Activated CD4-positive, alpha-beta T cell treated with anti-CD3 and anti-CD28 coated beads for 36 hours (primary cell): ENCODE measurements at regions of chr2 and their contacts with region 1.

Region 1: GRCh38 chr2:71545572-71546274 is 92.4 kb downstream of the DYSF start:
- DNase-seq: peak; percentile 67
- ATAC-seq: peak; percentile 85
- H3K4me3 Mint-ChIP-seq: peak overlapping the region; percentile 39
- H3K27ac Mint-ChIP-seq: no peak overlapping the region
- H3K4me1 Mint-ChIP-seq: peaks cover 7% of the 10 kb centered on the region
- H3K27me3 Mint-ChIP-seq: peaks cover 14% of the 10 kb centered on the region

Region 2: DNA sequence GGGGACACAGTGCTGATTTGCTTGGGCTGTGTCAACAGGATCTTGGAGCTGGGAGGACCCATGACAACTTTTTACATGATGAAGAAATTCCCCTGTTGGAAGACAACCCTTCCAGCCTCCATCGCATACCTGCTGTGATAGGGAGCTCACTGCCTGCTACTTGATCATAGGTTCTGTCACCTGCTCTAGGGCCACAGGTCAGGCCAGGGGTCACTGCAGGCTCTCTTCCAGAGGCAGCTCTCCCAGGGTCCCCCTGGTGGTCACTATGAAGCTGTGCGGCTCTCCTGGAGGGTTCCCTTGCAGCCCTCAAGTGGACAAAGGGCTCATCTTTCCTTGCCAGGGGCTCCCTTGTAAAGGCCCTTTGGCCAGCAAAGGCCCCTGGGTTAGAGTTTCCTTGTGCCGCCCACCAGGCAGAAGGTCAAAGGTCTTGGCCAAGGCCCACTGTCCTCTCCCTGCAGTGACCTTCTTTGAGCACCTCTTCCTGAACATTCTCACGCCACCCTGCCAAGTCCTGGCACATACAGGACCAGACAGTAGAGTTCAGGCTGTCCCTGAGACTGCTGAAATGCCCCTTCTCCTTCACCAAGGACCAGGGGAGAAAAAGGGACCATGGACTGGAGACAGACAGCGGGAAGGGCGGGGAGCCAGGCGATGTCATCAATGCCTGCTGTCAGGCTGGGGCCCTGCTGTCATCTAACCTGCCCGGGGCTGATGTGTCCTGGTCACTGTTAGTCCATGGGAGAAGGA is 252.7 kb after region 1 on chr2:
- CTCF ChIA-PET with region 1: no interaction called
- POLR2A ChIA-PET with region 1: no interaction called
- intact Hi-C with region 1: loop called (anchors 1 to 5 kb)
- DNase-seq: peak; percentile 42
- ATAC-seq: no peak
- H3K4me3 Mint-ChIP-seq: no peak overlapping the region
- H3K27ac Mint-ChIP-seq: no peak overlapping the region
- H3K4me1 Mint-ChIP-seq: no peaks in the 10 kb centered on the region
- H3K27me3 Mint-ChIP-seq: no peaks in the 10 kb centered on the region

Region 3: GRCh38 chr2:71873594-71873993 is 327.9 kb after region 1 on chr2:
- CTCF ChIA-PET with region 1: interaction called, 4 read pairs
- POLR2A ChIA-PET with region 1: no interaction called
- intact Hi-C with region 1: loop called in 1 of 2 experiments (anchors 5 kb)
- DNase-seq: no peak
- ATAC-seq: no peak
- H3K4me3 Mint-ChIP-seq: no peak overlapping the region
- H3K27ac Mint-ChIP-seq: no peak overlapping the region
- H3K4me1 Mint-ChIP-seq: no peaks in the 10 kb centered on the region
- H3K27me3 Mint-ChIP-seq: peaks cover 20% of the 10 kb centered on the region

Region 4: GRCh38 chr2:71923887-71924533 is 378.3 kb after region 1 on chr2:
- CTCF ChIA-PET with region 1: no interaction called
- POLR2A ChIA-PET with region 1: no interaction called
- intact Hi-C with region 1: loop called in 1 of 2 experiments (anchors 10 kb)
- DNase-seq: peak; percentile 77
- ATAC-seq: peak; percentile 63
- H3K4me3 Mint-ChIP-seq: no peak overlapping the region
- H3K27ac Mint-ChIP-seq: no peak overlapping the region
- H3K4me1 Mint-ChIP-seq: no peaks in the 10 kb centered on the region
- H3K27me3 Mint-ChIP-seq: no peaks in the 10 kb centered on the region

Region 5: DNA sequence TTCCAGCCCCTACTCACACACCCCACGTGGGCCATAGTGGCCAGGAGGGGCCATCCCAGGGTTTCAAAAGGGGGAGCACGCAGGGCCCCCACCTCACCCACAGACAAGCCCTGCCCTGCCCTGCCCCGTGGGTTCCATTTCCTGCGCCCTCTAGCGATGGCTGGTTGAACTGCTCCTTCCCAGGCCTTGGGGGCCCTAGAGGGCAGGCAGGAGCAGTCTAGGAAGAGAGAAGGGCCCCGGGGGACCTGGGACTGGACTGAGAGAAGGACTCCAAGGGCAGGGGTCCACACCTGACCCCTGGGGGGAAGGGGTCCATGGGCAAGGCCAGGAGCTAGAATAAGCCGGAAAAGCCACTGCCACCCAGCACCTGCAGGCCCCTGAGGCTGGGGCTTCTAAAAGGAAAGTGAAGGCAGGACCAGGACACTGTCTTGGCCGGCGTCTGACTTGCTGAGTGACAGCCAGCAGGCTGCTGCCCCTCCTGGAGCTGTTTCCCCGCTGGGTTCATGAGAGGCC is 591.8 kb after region 1 on chr2:
- CTCF ChIA-PET with region 1: no interaction called
- POLR2A ChIA-PET with region 1: no interaction called
- intact Hi-C with region 1: loop called in 1 of 2 experiments (anchors 5 kb)
- DNase-seq: peak; percentile 79
- ATAC-seq: peak; percentile 89
- H3K4me3 Mint-ChIP-seq: no peak overlapping the region
- H3K27ac Mint-ChIP-seq: no peak overlapping the region
- H3K4me1 Mint-ChIP-seq: no peaks in the 10 kb centered on the region
- H3K27me3 Mint-ChIP-seq: peaks cover 6% of the 10 kb centered on the region

Region 6: GRCh38 chr2:72579591-72580180 is 1034.0 kb after region 1 on chr2:
- CTCF ChIA-PET with region 1: interaction called, 3 read pairs
- POLR2A ChIA-PET with region 1: no interaction called
- intact Hi-C with region 1: loop called (anchors 2 to 5 kb)
- DNase-seq: no peak
- ATAC-seq: no peak
- H3K4me3 Mint-ChIP-seq: no peak overlapping the region
- H3K27ac Mint-ChIP-seq: no peak overlapping the region
- H3K4me1 Mint-ChIP-seq: no peaks in the 10 kb centered on the region
- H3K27me3 Mint-ChIP-seq: no peaks in the 10 kb centered on the region

Region 7: GRCh38 chr2:72745679-72746368 is 1200.1 kb after region 1 on chr2:
- CTCF ChIA-PET with region 1: no interaction called
- POLR2A ChIA-PET with region 1: no interaction called
- intact Hi-C with region 1: loop called (anchors 2 to 10 kb)
- DNase-seq: no peak
- ATAC-seq: no peak
- H3K4me3 Mint-ChIP-seq: no peak overlapping the region
- H3K27ac Mint-ChIP-seq: no peak overlapping the region
- H3K4me1 Mint-ChIP-seq: no peaks in the 10 kb centered on the region
- H3K27me3 Mint-ChIP-seq: no peaks in the 10 kb centered on the region